Dorsolateral prefrontal cortex (tissue), 120 donors: ENCODE measurements at regions of chr10 and their contacts with region 1.

Region 1: DNA sequence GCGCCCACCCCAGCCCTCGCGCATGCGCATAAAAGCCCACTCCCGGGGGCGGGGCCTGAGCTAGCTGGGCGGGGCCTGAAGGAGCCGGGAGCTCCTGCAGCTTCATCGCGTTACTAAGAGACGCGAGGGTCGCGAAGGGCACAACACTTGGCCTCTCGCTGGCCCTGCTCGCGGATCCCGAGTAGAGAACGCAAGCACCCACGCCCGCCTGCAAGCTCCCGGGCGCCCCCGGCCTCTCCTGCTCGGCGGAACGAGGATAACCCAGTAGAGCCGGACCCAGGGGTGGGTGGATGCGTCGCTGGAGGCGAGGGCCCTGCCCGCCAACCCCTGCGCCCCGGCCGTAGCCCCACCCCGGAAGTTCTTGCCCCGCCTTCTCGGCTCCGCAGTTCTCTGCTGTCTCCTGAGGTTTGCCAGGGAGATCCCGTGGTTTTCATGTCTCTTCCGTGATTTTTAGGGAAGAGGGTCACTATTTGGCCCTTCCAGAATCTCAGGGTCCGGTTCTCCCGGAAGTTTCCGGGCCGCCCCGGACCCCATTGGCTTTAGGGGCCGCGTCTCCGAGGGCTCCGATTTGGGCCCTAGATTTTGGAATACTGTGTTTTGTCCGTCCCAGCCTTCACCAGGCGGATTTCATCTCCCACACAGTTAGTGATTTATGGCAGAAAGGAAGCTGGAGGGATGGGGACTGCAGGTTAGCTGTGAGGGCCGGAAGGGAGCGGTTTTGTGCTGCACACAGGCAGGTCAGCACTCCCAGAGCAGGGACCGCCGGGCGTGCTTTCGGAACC is at the start of gene MEIG1:
- DNase-seq: peak; percentile 90 to 98 (median 96)
- H3K4me3 ChIP-seq: peak within 1 kb of the TSS; percentile 64 to 98 (median 86)
- H3K27ac ChIP-seq: peak within 1 kb of the TSS; percentile 82 to 99 (median 96)
- H3K27me3 ChIP-seq: no peaks in the 10 kb centered on the region
- CTCF ChIP-seq: peak in 13 of 56 donors; percentile 4 to 45 (median 15)
- total RNA-seq, gene MEIG1: 0.68 to 5.1 (median 1.8) TPM in 75 of 120 experiments, not detected in the others

Region 2: GRCh38 chr10:13971601-13972475 is 987.6 kb before region 1 on chr10:
- intact Hi-C with region 1: no loop called
- DNase-seq: no peak
- H3K4me3 ChIP-seq: peak overlapping the region in 5 of 59 donors; percentile 7 to 27 (median 24)
- H3K27ac ChIP-seq: peak overlapping the region in 9 of 59 donors; percentile 8 to 50 (median 17)
- H3K27me3 ChIP-seq: peaks cover 0 to 13% (median 0%) of the 10 kb centered on the region in 45 donors
- CTCF ChIP-seq: no peak

Region 3: DNA sequence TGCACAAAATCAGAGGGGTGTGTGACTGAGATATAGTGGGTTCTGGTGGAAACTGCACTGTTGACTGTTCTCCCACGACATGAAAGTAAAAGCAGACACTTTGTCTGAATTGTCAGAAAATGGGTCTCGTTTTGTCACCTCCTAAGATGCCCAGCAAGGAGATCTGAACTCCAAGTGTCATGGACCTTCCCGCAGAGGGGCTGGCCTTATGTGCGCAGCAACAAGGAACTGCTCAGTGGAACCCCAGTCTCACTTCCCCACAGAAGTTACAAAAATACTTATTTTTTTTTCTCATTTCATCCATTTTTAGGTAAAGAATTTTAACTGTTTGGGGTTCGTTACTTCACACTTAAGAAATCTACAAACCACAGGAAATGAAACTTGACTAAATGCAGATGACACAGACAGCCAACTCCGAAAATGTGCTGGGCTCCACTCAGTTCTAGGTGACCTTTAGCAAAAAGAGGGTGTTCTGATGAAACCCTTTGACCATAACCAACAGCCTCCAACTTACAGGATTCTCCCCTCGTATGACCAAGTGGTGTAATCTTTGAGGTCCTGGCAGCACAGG is 299.8 kb before region 1 on chr10:
- intact Hi-C with region 1: no loop called
- DNase-seq: peak in 2 of 10 donors; percentile 36 to 45
- H3K4me3 ChIP-seq: no peak overlapping the region
- H3K27ac ChIP-seq: no peak overlapping the region
- H3K27me3 ChIP-seq: no peaks in the 10 kb centered on the region
- CTCF ChIP-seq: no peak

Region 4: DNA sequence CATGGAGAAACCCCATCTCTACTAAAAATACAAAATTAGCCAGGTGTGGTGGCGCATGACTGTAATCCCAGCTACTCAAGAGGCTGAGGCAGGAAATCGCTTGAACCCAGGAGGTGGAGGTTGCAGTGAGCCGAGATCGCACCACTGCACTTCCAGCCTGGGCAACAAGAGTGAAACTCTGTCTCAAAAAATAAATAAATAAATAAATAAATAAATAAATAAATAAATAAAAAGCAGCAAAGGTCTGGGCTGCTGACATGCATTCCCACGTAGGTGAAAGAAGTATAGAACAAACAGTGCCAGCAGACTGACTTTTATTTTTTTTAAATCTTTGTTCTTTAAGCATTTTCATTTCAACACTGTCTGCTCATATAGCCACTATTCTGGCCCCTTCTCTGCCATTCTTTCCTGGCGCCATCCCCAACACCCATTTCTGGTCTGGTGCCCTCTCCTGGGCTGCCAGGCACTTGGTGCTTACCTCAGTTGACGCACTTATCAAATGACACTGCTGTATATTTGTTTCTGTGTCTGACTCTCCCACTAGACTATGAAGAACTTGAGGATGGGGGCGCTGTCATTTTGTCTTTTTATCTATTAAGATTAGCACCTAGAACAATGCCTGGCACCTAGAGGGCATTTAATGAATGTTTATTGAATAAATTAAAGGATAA is 200.3 kb before region 1 on chr10:
- intact Hi-C with region 1: no loop called
- DNase-seq: no peak
- H3K4me3 ChIP-seq: no peak overlapping the region
- H3K27ac ChIP-seq: no peak overlapping the region
- H3K27me3 ChIP-seq: no peaks in the 10 kb centered on the region
- CTCF ChIP-seq: no peak

Region 5: DNA sequence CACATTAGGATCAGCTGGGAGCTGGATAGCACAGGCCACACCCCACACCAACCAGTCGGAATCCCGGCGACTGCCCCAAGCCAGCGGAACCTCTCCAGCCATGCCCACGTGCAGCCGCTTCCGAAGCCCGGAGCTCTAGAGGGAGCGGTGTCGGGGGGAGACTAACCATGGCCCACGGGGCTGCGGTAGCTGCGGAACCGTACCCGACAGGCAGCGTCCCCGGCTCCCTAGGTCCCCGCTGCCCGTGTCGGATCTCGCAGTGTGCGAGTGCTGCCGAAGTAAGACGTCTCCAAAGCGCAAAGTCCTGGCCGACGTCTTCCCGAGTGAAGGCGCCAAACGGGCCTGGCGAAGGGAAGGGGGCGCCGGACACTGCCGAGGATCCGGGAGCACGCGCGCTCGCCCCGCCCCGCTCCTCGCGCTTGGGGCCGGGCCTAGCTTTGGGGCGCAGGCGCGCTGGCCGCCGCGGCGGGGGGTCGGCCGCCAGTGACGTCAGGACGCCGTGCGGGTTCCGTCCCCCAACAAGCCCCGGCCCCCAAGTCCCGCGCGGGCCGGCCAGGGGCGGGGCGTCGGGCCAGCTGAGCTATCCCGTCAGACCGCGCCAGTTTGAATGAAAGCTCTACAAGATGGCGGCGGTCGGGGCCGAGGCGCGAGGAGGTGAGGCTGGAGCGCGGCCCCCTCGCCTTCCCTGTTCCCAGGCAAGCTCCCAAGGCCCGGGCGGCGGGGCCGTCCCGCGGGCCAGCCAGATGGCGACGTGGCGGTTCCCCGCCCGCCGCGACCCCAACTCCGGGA is 81.0 kb before region 1 on chr10 and contains the start of gene SUV39H2:
- intact Hi-C with region 1: loop called (anchors 1 to 2 kb)
- DNase-seq: peak; percentile 89 to 98 (median 95)
- H3K4me3 ChIP-seq: peak within 1 kb of the TSS; percentile 67 to 99 (median 94)
- H3K27ac ChIP-seq: peak within 1 kb of the TSS; percentile 2 to 97 (median 92)
- H3K27me3 ChIP-seq: no peaks in the 10 kb centered on the region
- CTCF ChIP-seq: peak in 47 of 56 donors; percentile 12 to 71 (median 45)
- total RNA-seq, gene SUV39H2: 8.9 to 25.2 (median 16.2) TPM

Region 6: GRCh38 chr10:15943426-15943825 is 984.0 kb after region 1 on chr10:
- intact Hi-C with region 1: no loop called
- DNase-seq: no peak
- H3K4me3 ChIP-seq: no peak overlapping the region
- H3K27ac ChIP-seq: no peak overlapping the region
- H3K27me3 ChIP-seq: peaks cover 0 to 8% (median 0%) of the 10 kb centered on the region in 45 donors
- CTCF ChIP-seq: no peak